Psoas muscle (tissue), 8 donors: ENCODE measurements at regions of chr3 and their contacts with region 1.

Region 1: DNA sequence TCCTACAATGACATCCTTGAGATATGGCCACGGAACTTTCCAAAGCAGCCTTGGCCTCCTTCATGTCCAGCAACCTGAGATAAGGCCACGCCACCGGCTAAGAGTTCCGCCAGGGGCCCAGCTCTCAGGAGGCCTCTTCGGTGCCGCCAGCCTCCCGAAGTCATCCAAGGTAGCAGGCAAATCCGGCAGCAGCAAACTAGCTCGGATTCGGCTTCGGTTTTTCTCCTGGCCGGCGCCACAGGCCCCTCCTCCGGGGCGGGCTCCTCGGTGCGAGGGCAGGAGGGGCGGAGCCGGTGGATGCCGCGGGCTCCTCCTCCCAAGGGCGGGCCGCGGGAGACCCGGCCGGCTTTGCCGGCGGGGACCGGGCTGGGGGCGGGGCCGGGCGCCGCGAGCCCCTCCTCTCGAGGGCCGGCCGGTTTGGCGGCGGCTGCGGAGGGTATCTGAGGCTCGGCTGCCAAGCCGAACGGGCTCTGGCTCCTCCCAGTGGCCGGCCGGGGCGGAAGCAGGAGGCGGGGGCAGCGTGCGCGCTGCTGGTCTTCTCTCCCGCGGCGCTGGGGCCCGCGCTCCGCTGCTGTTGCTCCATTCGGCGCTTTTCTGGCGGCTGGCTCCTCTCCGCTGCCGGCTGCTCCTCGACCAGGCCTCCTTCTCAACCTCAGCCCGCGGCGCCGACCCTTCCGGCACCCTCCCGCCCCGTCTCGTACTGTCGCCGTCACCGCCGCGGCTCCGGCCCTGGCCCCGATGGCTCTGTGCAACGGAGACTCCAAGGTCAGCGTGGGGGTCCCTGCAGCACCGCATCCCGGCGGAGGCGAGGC is at the start of gene GMPS:
- DNase-seq: peak; percentile 95 to 97
- ATAC-seq: peak; percentile 96 to 99 (median 98)
- H3K4me3 ChIP-seq: peak within 1 kb of the TSS; percentile 85
- H3K27ac ChIP-seq: peak within 1 kb of the TSS; percentile 90
- H3K4me1 ChIP-seq: peaks cover 19% of the 10 kb centered on the region
- H3K27me3 ChIP-seq: no peaks in the 10 kb centered on the region
- CTCF ChIP-seq: peak; percentile 59
- total RNA-seq, gene GMPS: 24.7 to 31.3 (median 28.3) TPM

Region 2: GRCh38 chr3:155805802-155806618 is 64.3 kb before region 1 on chr3 and contains the start of gene C3orf33:
- intact Hi-C with region 1: loop called (anchors 1 to 5 kb)
- DNase-seq: peak; percentile 73 to 83
- ATAC-seq: peak; percentile 93 to 99 (median 96)
- H3K4me3 ChIP-seq: peak within 1 kb of the TSS; percentile 76
- H3K27ac ChIP-seq: peak within 1 kb of the TSS; percentile 84
- H3K4me1 ChIP-seq: no peaks in the 10 kb centered on the region
- H3K27me3 ChIP-seq: no peaks in the 10 kb centered on the region
- CTCF ChIP-seq: peak; percentile 88
- total RNA-seq, gene C3orf33: 2.8 to 5.1 (median 4.5) TPM

Region 3: DNA sequence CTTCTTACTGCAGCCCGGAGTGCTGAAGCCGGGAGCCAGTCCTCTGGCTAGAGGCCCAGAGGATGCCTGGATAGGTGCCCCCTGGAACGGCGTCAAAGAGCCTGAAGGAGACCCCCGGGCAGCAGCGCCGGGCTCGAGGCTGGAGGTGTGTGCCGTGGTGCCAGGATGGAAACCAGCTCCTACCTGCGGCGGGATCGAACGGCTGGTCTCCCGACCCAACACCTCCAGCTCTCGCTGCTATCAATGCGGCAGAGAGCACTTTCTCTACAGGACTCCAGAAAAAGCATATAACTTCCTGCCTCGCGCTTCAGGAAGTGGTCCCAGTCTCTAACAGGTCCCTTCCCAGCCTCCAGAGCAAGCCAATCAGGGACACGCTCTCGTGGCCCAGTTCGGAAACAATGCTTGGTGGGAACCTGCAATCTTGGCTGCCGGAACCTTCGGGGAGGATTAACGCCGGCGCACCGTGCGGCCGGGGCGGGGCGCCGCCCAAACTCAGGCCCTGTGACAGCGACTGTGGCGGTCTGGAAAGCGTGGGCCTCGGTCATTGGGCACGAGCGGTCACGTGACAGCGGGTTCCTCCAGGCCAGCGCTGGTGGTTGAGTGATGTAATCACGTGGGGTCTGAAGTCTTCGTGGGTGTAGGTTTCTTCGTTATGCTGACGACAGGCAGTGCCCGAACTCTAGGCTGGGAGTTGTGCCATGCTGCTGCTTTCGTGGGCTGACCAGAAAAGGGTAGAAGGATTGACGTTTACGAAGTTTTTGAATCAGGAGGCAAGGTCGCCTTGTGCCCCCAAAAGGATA is 16.0 kb before region 1 on chr3 and contains the start of gene SLC33A1:
- intact Hi-C with region 1: loop called (anchors 2 kb)
- DNase-seq: peak; percentile 99 to 100
- ATAC-seq: peak; percentile 95 to 98 (median 98)
- H3K4me3 ChIP-seq: peak within 1 kb of the TSS; percentile 84
- H3K27ac ChIP-seq: peak within 1 kb of the TSS; percentile 97
- H3K4me1 ChIP-seq: peaks cover 32% of the 10 kb centered on the region
- H3K27me3 ChIP-seq: no peaks in the 10 kb centered on the region
- CTCF ChIP-seq: no peak
- total RNA-seq, gene SLC33A1: 7.1 to 10.2 (median 8.5) TPM

Region 4: DNA sequence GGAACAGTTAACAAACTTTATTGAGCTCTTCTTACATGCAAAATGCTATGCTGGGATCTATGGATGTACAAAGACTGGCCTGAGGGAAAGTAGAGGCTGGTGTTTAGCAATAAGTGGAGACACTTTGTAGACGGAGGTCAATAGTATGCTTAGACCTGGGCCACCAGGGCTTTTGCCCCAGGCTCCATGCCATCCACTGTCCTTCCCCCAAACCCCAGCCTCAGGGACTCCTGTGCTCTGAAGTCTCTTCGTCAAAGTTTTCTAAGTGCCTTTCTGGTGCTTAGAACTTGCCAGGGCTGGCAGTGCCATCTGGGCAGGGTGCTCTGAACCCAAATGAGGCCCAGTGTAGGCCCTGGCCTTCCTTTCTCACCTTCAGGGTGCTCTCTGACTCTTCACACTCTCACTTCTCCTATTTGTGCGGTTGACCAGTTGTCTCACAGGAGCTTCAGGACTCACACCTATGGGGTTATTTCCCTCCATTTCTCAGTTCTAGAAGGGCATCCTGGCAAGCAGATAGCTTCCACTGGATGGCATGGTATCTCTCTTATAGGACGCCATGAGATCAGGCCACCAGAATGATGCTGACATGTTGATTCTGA is 228.2 kb after region 1 on chr3:
- intact Hi-C with region 1: no loop called
- DNase-seq: no peak
- ATAC-seq: no peak
- H3K4me3 ChIP-seq: no peak overlapping the region
- H3K27ac ChIP-seq: no peak overlapping the region
- H3K4me1 ChIP-seq: no peaks in the 10 kb centered on the region
- H3K27me3 ChIP-seq: no peaks in the 10 kb centered on the region
- CTCF ChIP-seq: no peak

Region 5: DNA sequence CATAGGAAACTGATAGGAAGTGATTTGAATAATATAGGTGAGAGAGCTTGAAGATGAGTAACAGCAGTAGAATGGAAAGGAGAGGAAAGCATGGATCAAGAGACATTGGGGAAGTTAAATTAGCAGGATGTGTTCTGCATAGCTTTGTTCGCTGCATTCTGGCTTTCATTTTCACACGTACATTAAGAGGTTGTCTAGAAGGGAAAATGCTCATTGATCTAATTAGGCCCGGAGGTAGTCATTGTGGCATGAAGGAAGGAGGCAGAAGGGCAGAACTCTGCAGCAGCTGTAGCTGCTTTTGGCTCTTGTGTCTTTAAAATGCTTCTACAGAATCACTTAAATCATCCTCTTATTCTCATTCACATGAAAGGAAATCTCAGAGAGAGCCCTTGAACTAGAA is 290.3 kb after region 1 on chr3:
- intact Hi-C with region 1: no loop called
- DNase-seq: no peak
- ATAC-seq: no peak
- H3K4me3 ChIP-seq: no peak overlapping the region
- H3K27ac ChIP-seq: no peak overlapping the region
- H3K4me1 ChIP-seq: no peaks in the 10 kb centered on the region
- H3K27me3 ChIP-seq: no peaks in the 10 kb centered on the region
- CTCF ChIP-seq: no peak

Region 6: GRCh38 chr3:156307704-156308103 is 437.4 kb after region 1 on chr3:
- intact Hi-C with region 1: no loop called
- DNase-seq: peak; percentile 58 to 64
- ATAC-seq: no peak
- H3K4me3 ChIP-seq: no peak overlapping the region
- H3K27ac ChIP-seq: no peak overlapping the region
- H3K4me1 ChIP-seq: no peaks in the 10 kb centered on the region
- H3K27me3 ChIP-seq: no peaks in the 10 kb centered on the region
- CTCF ChIP-seq: no peak

Region 7: GRCh38 chr3:156323466-156323865 is 453.1 kb after region 1 on chr3:
- intact Hi-C with region 1: no loop called
- DNase-seq: no peak
- ATAC-seq: no peak
- H3K4me3 ChIP-seq: no peak overlapping the region
- H3K27ac ChIP-seq: no peak overlapping the region
- H3K4me1 ChIP-seq: no peaks in the 10 kb centered on the region
- H3K27me3 ChIP-seq: no peaks in the 10 kb centered on the region
- CTCF ChIP-seq: no peak